ENCODE measurements at regions of chrX and their contacts with region 1.

Region 1: GRCh38 chrX:37926700-37927099 is 79.3 kb upstream of the DYNLT3 start:
- DNase-seq: no peak
- H3K4me3 ChIP-seq: no peak overlapping the region
- H3K27ac ChIP-seq: no peak overlapping the region
- H3K4me1 ChIP-seq: no peaks in the 10 kb centered on the region
- H3K27me3 ChIP-seq: no peaks in the 10 kb centered on the region
- CTCF ChIP-seq: peak in 3 of 4 experiments; percentile 35 to 72 (median 63)
- POLR2A ChIP-seq: no peak

Region 2: DNA sequence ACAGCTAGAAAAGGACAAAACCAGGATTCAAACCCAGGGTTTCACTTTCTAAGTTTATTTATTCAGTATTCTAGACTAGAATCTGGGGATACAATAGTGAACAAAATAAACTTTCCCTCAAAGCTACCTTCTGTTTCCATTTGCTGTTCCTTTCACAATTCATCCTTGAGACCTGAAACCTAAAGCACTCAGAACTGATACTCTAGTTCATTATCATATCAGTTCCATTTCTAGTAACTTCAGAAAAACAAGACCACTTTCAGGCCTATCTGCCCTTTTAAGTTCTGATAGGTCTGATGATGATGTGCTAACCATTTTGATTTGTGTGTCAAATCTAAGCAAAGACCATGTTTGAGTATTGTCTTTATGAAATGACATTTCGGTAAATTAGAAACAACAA is 248.9 kb before region 1 on chrX:
- intact Hi-C with region 1: no loop called
- DNase-seq: no peak
- H3K4me3 ChIP-seq: no peak overlapping the region
- H3K27ac ChIP-seq: no peak overlapping the region
- H3K4me1 ChIP-seq: no peaks in the 10 kb centered on the region
- H3K27me3 ChIP-seq: no peaks in the 10 kb centered on the region
- CTCF ChIP-seq: no peak
- POLR2A ChIP-seq: no peak

Region 3: GRCh38 chrX:38166478-38167083 is 239.9 kb after region 1 on chrX:
- intact Hi-C with region 1: loop called (anchors 5 kb)
- DNase-seq: peak; percentile 4
- H3K4me3 ChIP-seq: no peak overlapping the region
- H3K27ac ChIP-seq: no peak overlapping the region
- H3K4me1 ChIP-seq: no peaks in the 10 kb centered on the region
- H3K27me3 ChIP-seq: no peaks in the 10 kb centered on the region
- CTCF ChIP-seq: peak; percentile 37 to 63 (median 55)
- POLR2A ChIP-seq: no peak

Region 4: GRCh38 chrX:38327007-38327774 is 400.5 kb after region 1 on chrX and contains the start of gene RPGR:
- intact Hi-C with region 1: loop called (anchors 5 kb)
- DNase-seq: peak; percentile 92
- H3K4me3 ChIP-seq: peak within 1 kb of the TSS; percentile 56 to 58
- H3K27ac ChIP-seq: peak within 1 kb of the TSS; percentile 81 to 84
- H3K4me1 ChIP-seq: no peaks in the 10 kb centered on the region
- H3K27me3 ChIP-seq: no peaks in the 10 kb centered on the region
- CTCF ChIP-seq: peak; percentile 40 to 85 (median 78)
- POLR2A ChIP-seq: no peak
- total RNA-seq, gene RPGR: 12.1 to 12.9 TPM